Common myeloid progenitor, CD34-positive (primary cell): ENCODE measurements at regions of chr3 and their contacts with region 1.

Region 1: DNA sequence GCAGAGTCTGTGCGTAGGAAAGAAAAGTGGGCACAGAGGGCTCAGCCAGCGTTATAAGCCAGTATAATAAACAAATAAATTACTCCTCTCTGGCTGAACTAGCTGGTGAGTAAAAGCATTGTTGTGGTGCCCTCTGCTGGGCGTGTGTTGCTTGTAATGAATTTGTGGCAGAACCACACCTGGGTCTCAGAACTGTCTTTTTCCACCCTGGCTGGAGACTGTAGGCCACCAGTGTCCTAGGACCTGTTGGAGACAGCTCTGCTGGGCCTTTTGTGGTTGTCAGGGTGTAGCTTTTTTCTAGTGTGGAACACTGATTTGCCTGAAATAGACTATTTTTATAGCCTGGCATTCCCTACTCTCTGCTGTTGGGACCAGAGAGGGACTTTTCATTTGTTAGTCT is 130.5 kb upstream of the EIF1B start:
- DNase-seq: peak; percentile 58 to 79 (median 70)
- H3K4me3 ChIP-seq: no peak overlapping the region
- H3K27ac ChIP-seq: no peak overlapping the region
- H3K4me1 ChIP-seq: no peaks in the 10 kb centered on the region
- H3K27me3 ChIP-seq: no peaks in the 10 kb centered on the region

Region 2: DNA sequence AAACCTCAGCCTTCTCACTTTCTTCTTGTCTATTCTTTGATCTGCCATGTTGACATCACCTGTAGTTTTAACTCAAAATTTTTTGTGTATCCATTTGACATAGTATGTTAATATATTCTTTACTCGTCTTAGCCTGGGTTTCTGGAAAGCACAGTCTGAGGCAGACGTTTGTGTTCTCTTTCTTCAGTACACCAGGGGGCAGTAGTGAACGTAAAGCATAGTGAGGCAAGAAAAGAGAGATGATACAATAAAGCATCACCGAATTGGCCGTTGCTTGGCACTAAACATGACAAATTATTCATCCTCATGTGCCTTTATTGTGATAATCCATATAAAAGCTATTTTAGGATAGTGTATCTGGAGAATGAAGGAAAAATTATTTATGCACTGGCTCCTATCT is 510.6 kb before region 1 on chr3:
- CTCF ChIA-PET with region 1: interaction called, 14 read pairs
- POLR2A ChIA-PET with region 1: no interaction called
- DNase-seq: peak; percentile 50 to 78 (median 73)
- H3K4me3 ChIP-seq: no peak overlapping the region
- H3K27ac ChIP-seq: no peak overlapping the region
- H3K4me1 ChIP-seq: no peaks in the 10 kb centered on the region
- H3K27me3 ChIP-seq: peaks cover 0 to 8% (median 0%) of the 10 kb centered on the region in 5 experiments

Region 3: DNA sequence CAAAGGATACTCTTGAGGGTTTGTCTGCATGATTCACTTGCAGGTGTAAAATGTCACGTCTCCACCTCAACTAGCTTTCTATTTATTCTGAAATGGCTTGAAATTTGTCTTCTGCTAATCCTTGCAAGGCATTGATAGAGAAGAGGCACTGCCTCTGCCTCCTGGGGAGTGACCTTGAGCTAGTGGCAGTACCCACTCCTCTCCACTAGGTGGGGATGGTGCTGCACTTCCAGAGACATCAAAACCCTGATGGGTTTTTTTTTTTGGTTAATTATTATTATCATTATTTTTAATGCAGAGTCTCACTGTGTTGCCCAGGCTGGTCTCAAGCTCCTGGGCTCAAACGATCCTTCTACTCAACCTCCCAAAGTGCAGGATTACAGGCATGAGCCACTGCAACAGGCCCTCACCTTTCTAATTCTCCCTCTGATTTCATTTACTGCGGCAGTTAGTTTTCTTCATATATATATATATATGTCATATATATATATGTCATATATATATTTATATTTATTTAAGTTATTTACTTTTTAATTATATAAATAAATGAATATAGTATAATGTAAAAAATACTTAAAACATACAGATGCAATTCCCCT is 12.9 kb after region 1 on chr3:
- CTCF ChIA-PET with region 1: interaction called, 33 read pairs
- POLR2A ChIA-PET with region 1: no interaction called
- DNase-seq: peak; percentile 48 to 78 (median 73)
- H3K4me3 ChIP-seq: no peak overlapping the region
- H3K27ac ChIP-seq: no peak overlapping the region
- H3K4me1 ChIP-seq: peaks cover 0 to 8% (median 3%) of the 10 kb centered on the region in 4 experiments
- H3K27me3 ChIP-seq: no peaks in the 10 kb centered on the region

Region 4: DNA sequence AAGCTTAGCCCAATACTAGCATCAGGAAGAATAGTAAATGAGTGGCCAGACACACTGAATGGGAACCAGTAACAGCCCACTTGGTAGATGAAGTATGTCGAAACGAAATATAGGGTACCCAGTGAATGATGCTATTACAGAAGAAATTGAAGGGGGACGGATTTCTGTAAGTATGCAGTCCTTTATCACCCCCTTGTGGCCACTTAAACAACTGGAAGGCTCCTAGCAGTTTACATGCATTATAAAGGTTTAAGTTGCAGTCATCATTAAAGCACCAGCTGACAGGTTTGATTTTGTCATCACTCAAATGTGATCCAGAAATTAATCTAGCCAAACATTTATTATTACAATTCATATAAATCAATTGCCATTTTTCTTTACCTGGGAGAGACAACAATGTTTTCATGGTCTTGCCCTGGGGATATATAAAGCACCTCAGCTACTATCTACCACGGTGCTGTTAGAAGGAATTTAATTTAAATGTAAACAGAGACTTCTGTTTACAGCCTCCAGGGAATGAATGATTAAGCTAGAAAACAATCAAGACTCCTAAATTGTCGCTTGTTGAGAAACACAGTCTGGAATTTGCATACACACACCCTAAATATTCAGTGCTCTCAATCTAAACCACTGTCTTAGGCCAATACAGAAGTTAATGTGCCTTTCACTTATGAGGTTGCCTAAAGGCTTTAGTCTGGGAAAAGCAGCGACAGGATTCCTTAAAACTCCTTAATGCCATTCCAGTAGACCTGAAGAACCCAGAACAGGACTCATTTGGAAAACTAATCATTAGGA is 138.2 kb after region 1 on chr3:
- CTCF ChIA-PET with region 1: interaction called, 19 read pairs
- POLR2A ChIA-PET with region 1: no interaction called
- DNase-seq: peak; percentile 81 to 89 (median 85)
- H3K4me3 ChIP-seq: no peak overlapping the region
- H3K27ac ChIP-seq: no peak overlapping the region
- H3K4me1 ChIP-seq: no peaks in the 10 kb centered on the region
- H3K27me3 ChIP-seq: no peaks in the 10 kb centered on the region